ENCODE measurements at regions of chr12 and their contacts with region 1.

Region 1: DNA sequence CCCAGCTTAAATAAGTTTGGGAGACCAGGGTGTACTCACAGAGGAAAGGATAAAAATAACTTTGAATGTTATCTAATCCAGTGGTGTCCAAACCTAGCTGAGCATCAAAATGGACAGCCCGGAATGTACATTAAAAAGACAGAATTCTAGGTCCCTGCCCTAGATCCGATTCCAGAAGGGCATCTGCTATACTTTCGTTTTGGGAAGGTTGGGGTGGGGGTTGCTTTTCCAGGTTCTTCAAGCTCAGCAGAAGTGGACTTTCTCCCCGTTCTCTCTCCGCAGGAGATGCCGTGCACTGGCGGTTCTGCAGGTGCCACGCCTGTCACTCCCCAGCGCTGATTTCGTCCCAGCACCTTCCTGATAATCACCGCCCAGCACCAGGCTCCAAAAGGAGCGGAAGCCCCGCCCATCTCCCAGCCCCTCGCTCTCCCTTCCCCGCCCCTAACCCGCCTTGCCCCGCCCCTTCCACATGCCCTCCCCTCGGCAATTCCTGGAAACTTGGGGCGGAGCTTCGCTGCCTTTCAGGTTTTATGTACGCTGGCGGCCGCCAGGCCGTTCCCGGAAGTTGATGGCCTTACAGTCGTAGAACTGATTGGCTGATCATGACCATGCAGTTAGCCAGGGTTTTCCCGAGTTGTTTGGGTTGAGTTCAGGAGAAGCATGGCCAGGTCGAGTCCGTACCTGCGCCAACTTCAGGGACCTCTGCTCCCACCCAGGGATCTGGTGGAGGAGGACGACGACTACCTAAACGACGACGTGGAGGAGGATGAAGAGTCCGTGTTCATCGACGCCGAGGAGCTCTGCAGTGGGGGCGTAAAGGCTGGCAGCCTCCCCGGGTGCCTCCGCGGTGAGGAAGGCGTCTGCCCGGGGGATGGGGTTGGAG is at the start of gene HELB:
- DNase-seq: peak; percentile 97
- H3K4me3 ChIP-seq: peak within 1 kb of the TSS; percentile 86
- H3K27ac ChIP-seq: peak within 1 kb of the TSS; percentile 78
- H3K4me1 ChIP-seq: peaks cover 8% of the 10 kb centered on the region
- H3K27me3 ChIP-seq: peaks cover 13% of the 10 kb centered on the region
- CTCF ChIP-seq: no peak
- total RNA-seq, gene HELB: 4.1 and 4.6 TPM in 2 replicates

Region 2: DNA sequence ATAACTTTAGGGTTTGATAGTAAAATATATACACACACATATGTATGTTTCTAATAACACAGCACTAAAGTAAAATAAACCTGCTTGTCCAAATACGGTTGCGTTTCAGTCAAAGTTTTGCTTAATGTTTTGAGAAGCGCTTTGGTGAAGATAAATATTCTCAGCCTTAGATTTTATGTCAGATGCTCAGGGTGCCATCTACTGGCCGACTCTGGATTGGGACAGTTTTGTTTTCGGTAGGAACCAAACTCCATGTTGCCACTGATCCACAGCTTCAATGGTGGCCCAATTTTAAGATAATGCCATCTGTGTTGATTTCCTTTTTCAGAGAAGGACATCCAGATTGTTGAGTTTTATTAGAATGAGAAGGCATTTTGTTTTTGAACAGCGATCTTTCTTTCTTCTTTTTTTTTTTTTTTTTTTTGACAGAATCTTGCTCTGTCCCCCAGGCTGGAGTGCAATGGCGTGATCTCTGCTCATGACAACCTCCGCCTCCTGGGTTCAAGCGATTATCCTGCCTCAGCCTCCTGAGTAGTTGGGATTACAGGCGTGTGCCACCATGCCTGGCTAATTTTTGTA is 214.7 kb before region 1 on chr12:
- CTCF ChIA-PET with region 1: no interaction called
- POLR2A ChIA-PET with region 1: no interaction called
- intact Hi-C with region 1: no loop called
- DNase-seq: peak; percentile 88
- H3K4me3 ChIP-seq: no peak overlapping the region
- H3K27ac ChIP-seq: peak overlapping the region; percentile 42
- H3K4me1 ChIP-seq: peaks cover 26% of the 10 kb centered on the region
- H3K27me3 ChIP-seq: no peaks in the 10 kb centered on the region
- CTCF ChIP-seq: peak; percentile 91

Region 3: DNA sequence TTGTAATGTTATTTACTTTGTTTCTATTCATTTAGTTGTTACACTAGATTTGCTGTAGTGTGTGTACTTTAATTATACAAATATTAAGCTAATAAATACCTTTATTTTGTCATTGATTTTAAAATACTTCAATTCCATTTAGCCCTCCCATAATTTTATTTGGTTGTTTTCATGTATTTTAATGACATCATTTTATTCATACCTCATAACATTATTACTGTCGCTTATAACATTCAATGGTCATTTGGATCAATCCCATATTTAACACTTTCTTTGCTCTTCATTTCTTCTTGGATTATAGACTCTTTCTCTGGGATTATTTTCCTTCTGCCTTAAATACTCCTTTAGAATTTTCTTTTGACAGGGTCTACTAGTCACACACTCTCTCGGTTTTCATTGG is 880.4 kb after region 1 on chr12:
- CTCF ChIA-PET with region 1: interaction called, 13 read pairs
- POLR2A ChIA-PET with region 1: no interaction called
- intact Hi-C with region 1: no loop called
- DNase-seq: no peak
- H3K4me3 ChIP-seq: no peak overlapping the region
- H3K27ac ChIP-seq: no peak overlapping the region
- H3K4me1 ChIP-seq: no peaks in the 10 kb centered on the region
- H3K27me3 ChIP-seq: peaks cover 55% of the 10 kb centered on the region
- CTCF ChIP-seq: no peak

Measured in A673 (cell line).